PC-3 (cell line): ENCODE measurements at regions of chr11 and their contacts with region 1.

Region 1: DNA sequence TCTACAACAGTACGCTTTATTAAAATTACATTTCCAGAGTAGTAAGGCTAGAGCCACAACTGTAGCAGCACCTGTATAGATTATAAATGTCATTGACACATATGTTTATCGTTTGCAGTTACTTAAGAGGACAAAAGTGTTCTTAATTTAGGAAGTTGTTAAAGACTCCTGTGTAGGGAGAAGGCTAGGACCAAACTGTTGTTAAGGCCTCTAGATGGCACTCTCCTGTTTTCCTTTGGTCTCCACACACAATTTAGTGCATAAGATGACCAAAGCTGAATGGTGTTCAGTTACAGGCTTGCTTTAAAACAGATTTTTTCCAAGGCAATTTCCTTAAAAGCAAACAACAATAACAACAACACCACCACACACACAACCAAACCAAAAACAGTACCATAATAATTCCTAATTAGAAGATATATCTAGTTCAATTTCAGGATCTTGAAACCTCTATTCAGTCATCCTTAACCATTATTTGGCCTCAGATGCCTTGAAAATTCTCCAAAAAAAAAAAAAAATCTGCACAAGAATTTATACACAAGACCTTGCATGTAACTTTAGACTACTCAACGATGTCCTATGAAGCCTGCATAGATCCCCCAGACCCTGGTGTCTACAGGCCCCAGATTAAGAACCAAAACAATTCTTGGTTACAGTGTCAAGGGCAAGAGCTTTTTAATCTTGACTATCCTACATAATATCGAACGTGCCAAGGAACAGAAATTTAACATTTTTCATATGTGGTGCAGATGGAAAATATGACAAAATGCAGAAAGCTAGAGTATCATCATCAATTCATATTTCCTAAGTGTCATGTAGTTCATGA is 42.6 kb upstream of the APOA1 start:
- DNase-seq: peak; percentile 86
- ATAC-seq: peak; percentile 100
- H3K4me3 ChIP-seq: no peak overlapping the region
- H3K27ac ChIP-seq: no peak overlapping the region
- H3K4me1 ChIP-seq: no peaks in the 10 kb centered on the region; the same call in 1 of the 2 replicates
- H3K27me3 ChIP-seq: no peaks in the 10 kb centered on the region
- CTCF ChIP-seq: peak; percentile 93

Region 2: DNA sequence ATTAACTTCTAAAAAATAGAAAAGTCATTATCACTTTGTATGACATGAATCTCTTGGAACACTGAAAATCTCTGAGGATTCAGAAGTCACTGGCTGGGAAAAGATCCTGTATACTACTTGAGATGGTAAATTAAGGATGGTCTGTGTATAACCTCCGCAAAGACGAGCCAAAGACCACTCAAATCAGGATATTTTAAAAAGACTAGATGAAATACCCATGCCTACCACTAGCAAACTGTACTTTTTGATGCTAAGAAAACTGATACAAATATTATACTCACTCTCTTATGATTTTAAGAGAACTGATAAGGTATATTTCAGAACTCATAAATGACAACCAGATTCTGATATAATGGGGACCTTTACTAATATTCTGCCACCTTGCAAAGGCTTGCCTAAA is 36.0 kb after region 1 on chr11:
- CTCF ChIA-PET with region 1: no interaction called
- POLR2A ChIA-PET with region 1: no interaction called
- intact Hi-C with region 1: loop called (anchors 5 kb)
- DNase-seq: no peak
- ATAC-seq: no peak
- H3K4me3 ChIP-seq: no peak overlapping the region
- H3K27ac ChIP-seq: no peak overlapping the region
- H3K4me1 ChIP-seq: peaks cover 17% of the 10 kb centered on the region
- H3K27me3 ChIP-seq: no peaks in the 10 kb centered on the region
- CTCF ChIP-seq: no peak

Region 3: DNA sequence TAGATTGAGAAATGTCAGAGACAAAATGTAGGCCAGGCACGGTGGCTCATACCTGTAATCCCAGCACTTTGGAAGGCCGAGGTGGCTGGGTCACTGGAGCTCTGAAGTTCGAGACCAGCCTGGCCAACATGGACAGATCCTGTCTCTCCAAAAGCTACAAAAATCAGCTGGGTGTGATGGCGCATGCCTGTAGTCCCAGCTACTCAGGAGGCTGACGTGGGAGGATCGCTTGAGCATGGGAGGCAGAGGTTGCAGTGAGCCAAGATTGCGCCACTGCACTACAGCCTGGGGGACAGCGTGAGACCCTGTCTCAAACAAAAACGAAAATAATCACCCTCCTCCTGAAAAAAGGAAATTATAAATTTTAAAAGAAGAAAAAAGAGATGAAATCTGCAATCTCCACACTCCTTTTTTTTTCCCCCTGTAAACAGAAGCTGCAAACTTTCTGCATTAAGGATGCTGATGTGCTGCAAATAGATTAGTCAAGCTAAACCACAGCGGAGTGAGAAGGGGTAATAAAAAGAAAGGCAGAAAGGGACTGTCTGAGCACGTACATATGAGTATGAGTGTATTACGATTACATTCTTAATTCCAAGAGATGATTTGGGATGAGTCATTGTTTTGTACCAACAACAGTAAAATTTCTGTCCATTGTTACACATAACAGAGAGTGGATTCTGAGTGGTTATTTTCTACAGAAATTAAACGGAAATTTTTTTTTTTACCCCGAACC is 131.0 kb after region 1 on chr11:
- CTCF ChIA-PET with region 1: no interaction called
- POLR2A ChIA-PET with region 1: no interaction called
- intact Hi-C with region 1: loop called (anchors 10 kb)
- DNase-seq: peak; percentile 98
- ATAC-seq: peak; percentile 97
- H3K4me3 ChIP-seq: no peak overlapping the region
- H3K27ac ChIP-seq: peak overlapping the region; percentile 70
- H3K4me1 ChIP-seq: peaks cover 21% of the 10 kb centered on the region
- H3K27me3 ChIP-seq: no peaks in the 10 kb centered on the region
- CTCF ChIP-seq: no peak

Region 4: DNA sequence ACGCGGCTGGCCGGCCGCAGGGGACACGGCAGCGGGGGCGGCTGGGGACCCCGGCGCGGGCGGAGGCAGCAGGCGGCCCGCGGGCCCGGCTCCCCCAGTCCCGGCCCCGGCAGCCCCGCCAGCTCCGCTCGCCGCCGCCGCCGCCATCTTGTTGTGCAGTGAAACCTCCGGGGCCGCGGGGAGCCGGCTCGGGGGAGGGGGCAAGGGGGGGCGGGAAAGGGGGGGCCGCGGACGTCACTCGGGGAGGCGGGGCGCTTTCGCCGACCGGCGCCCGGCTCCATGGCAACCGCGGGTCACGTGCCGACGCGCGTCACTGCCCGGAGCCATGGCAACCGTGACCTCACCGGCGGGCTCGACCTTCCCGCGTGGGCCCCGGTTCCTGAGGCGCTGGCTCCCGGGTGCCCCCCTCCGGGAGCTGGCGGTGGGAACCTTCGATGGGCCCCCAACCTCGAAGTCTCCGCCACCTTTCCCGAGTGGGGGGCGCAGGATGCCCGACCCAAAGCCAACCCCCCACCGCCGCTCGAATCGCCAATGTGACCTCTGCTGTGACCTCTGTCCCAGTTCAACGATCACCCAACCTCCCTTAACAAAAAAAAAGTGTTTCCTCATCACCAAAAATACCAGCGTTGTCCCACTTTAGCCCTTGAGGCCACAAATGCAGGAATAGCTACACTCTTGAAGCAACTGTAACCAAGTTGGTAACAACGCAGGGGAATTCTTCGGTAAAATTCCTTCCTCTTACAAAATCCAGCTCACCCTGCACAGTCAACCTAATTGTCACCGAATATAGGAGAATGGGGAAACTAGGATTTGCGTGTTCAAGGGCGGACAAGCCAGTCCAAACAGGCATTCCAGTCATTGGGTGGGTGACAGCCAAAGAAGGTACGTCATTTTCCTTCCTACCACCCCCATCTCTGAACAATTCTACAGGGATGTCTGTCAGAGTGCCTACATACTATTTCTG is 218.5 kb after region 1 on chr11 and contains the start of gene SIK3:
- CTCF ChIA-PET with region 1: interaction called, 4 read pairs
- POLR2A ChIA-PET with region 1: no interaction called
- intact Hi-C with region 1: loop called (anchors 1 kb)
- DNase-seq: peak; percentile 92
- ATAC-seq: peak; percentile 80
- H3K4me3 ChIP-seq: peak within 1 kb of the TSS; percentile 95
- H3K27ac ChIP-seq: peak within 1 kb of the TSS; percentile 90
- H3K4me1 ChIP-seq: peaks cover 41% of the 10 kb centered on the region
- H3K27me3 ChIP-seq: no peaks in the 10 kb centered on the region
- CTCF ChIP-seq: no peak; the same call in 1 of the 2 replicates
- total RNA-seq, gene SIK3: 14.5 and 17.4 TPM in 2 replicates

Region 5: DNA sequence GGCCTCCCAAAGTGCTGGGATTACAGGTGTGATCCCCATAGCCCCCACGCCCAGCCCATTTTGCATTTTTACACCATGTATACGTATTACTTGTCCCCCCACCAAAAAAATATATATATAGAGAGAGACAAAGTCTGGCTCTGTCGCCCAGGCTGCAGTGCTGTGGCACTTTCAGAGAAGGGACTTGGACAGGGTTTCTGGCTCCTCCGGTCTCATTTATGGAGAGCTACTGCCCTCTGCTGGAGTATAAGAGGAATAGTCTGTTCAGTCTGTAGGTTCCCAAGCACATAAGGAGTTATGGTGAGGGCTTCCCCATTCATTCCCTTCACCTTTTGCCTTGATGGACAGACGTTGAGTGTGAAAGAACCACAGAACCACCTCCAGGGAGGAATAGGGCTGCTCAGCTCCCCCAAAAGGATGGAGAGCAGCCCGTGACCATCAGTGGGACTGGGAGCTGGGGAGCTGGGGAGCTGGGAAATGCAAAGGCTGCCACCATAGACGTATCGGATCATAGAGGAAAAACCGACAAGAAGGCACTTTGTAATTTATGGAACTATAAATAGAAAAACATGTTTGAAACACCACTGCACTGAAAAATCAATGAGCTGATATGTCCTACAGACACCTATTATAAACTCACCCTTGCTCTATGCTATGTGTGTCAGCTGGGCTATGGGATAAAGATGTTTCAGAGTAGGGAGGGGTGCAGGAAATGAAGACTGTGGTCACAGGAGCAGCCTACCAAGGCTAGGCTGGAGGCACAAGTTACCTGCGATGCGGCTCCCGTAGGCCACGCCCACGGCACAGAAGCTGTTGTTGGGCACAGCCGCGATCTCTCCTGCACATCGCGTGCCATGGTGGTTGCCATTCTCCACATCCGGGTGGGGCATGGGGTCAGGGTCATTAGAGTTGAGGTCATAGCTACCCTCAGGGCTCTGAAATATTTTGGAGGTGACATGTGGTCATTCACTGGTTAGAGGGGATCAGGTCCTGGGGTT is 346.7 kb after region 1 on chr11:
- CTCF ChIA-PET with region 1: no interaction called
- POLR2A ChIA-PET with region 1: no interaction called
- intact Hi-C with region 1: loop called (anchors 2 kb)
- DNase-seq: peak; percentile 83
- ATAC-seq: peak; percentile 73
- H3K4me3 ChIP-seq: no peak overlapping the region
- H3K27ac ChIP-seq: no peak overlapping the region
- H3K4me1 ChIP-seq: peaks cover 22% of the 10 kb centered on the region
- H3K27me3 ChIP-seq: no peaks in the 10 kb centered on the region
- CTCF ChIP-seq: peak; percentile 90